SK-N-SH (cell line): ENCODE measurements at regions of chr2 and their contacts with region 1.

Region 1: DNA sequence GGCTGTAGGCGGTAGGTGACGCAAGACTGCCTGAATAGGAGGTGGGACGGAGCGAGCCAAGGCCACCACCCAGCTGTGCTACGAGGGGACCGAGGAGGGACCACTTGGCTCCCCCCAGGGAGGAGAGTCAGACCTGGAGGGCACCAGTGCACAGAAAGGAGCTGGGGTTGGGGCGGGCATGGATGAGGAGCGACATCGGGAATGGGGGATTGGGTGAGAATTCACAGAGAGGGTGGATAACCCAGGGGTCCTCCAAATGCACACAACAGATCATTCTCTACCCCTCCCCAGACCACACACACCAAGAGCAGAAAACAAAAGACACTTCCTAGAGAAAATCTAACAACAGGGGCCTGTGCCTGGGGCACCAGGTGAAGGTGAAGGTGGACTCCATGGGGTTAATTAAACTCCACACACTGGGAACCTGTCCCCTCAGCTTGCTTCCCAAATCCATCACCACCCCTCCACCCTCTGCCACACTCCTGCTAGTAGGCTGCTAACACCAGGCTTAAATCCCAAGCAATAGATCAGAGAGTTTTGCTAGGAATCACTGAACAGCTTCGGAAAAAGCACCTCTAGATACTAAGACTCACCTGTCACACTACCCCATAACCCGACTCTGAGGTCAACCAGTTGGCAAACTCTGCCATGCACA is 274.6 kb downstream of the EIPR1 start:
- DNase-seq: no peak
- H3K4me3 ChIP-seq: no peak overlapping the region
- H3K27ac ChIP-seq: peak overlapping the region in 1 of 2 experiments; percentile 100; a peak in 2 of 4 replicates
- H3K4me1 ChIP-seq: peaks cover 0 to 77% of the 10 kb centered on the region in 2 experiments; a peak in 2 of 4 replicates
- H3K27me3 ChIP-seq: no peaks in the 10 kb centered on the region
- CTCF ChIP-seq: no peak
- EP300 ChIP-seq: no peak
- RAD21 ChIP-seq: no peak

Region 2: GRCh38 chr2:3009005-3009404 is 94.0 kb before region 1 on chr2:
- CTCF ChIA-PET with region 1: no interaction called
- POLR2A ChIA-PET with region 1: interaction called, 10 read pairs
- DNase-seq: peak; percentile 60
- H3K4me3 ChIP-seq: no peak overlapping the region; a peak in 1 of 4 replicates
- H3K27ac ChIP-seq: peak overlapping the region in 1 of 2 experiments; percentile 85; a peak in 2 of 4 replicates
- H3K4me1 ChIP-seq: peaks cover 0 to 33% of the 10 kb centered on the region in 2 experiments; a peak in 2 of 4 replicates
- H3K27me3 ChIP-seq: no peaks in the 10 kb centered on the region
- CTCF ChIP-seq: no peak
- EP300 ChIP-seq: no peak; a peak in 1 of 4 replicates
- RAD21 ChIP-seq: peak; percentile 7

Region 3: GRCh38 chr2:3041841-3042608 is 61.0 kb before region 1 on chr2:
- CTCF ChIA-PET with region 1: no interaction called
- POLR2A ChIA-PET with region 1: interaction called, 10 read pairs
- DNase-seq: peak; percentile 90
- H3K4me3 ChIP-seq: no peak overlapping the region
- H3K27ac ChIP-seq: peak overlapping the region; percentile 18 to 95; a peak in 3 of 4 replicates
- H3K4me1 ChIP-seq: peaks cover 0 to 30% of the 10 kb centered on the region in 2 experiments; a peak in 1 of 4 replicates
- H3K27me3 ChIP-seq: no peaks in the 10 kb centered on the region
- CTCF ChIP-seq: no peak
- EP300 ChIP-seq: no peak
- RAD21 ChIP-seq: no peak

Region 4: DNA sequence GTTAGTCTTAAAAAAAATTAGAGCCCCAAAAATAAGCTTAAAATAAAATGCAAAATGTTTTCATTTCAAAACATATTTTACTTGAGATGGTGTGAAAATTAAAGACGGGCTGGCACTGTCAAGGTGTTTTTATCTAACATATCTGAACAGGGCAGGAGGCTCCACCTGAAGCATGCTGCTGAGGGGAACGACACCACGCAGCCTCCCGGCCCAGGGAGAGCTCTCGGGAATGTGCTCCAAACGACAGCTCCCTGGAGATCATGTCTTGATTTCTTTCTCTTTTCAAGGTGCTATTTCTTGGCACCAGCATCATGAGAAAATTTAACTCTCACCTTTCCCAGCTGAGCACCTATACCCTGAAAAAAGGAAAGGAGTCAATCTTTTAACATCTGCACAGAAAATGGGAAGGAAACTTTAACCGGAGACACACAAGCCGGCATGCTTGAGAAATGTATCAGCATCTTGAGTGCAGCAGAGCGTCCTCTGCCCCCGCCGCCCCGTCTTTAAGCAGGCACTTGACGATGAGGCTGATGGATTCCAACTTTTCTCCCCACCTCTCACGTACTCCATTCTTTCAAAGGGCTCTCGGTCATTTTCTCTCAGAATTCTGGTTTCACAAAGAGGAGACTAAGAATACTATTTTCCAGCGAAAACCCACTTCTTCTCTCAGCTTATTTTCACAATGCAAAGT is 218.0 kb after region 1 on chr2:
- CTCF ChIA-PET with region 1: no interaction called
- POLR2A ChIA-PET with region 1: no interaction called
- DNase-seq: no peak
- H3K4me3 ChIP-seq: no peak overlapping the region
- H3K27ac ChIP-seq: no peak overlapping the region
- H3K4me1 ChIP-seq: peaks cover 0 to 3% of the 10 kb centered on the region in 2 experiments; a peak in 1 of 4 replicates
- H3K27me3 ChIP-seq: no peaks in the 10 kb centered on the region
- CTCF ChIP-seq: no peak
- EP300 ChIP-seq: no peak
- RAD21 ChIP-seq: no peak